Activated CD4-positive, alpha-beta memory T cell treated with anti-CD3 and anti-CD28 coated beads, Interleukin-2, amount 10 ng/mL, durations not matched to agents 7 days and 5 days (primary cell): ENCODE measurements at regions of chr12 and their contacts with region 1.

Region 1: GRCh38 chr12:12376646-12377448 is 20.0 kb downstream of the BORCS5 start:
- DNase-seq: no peak
- H3K4me3 Mint-ChIP-seq: no peak overlapping the region
- H3K27ac Mint-ChIP-seq: peak overlapping the region; percentile 65
- H3K4me1 Mint-ChIP-seq: peaks cover 60% of the 10 kb centered on the region
- H3K27me3 Mint-ChIP-seq: no peaks in the 10 kb centered on the region

Region 2: GRCh38 chr12:12334367-12335040 is 42.3 kb before region 1 on chr12:
- CTCF ChIA-PET with region 1: no interaction called
- POLR2A ChIA-PET with region 1: no interaction called
- DNase-seq: peak; percentile 65
- H3K4me3 Mint-ChIP-seq: no peak overlapping the region
- H3K27ac Mint-ChIP-seq: no peak overlapping the region
- H3K4me1 Mint-ChIP-seq: peaks cover 23% of the 10 kb centered on the region
- H3K27me3 Mint-ChIP-seq: peaks cover 13% of the 10 kb centered on the region

Region 3: GRCh38 chr12:12456637-12457036 is 79.8 kb after region 1 on chr12:
- CTCF ChIA-PET with region 1: interaction called, 8 read pairs
- POLR2A ChIA-PET with region 1: interaction called, 22 read pairs
- DNase-seq: no peak
- H3K4me3 Mint-ChIP-seq: peak overlapping the region; percentile 46
- H3K27ac Mint-ChIP-seq: peak overlapping the region; percentile 84
- H3K4me1 Mint-ChIP-seq: peaks cover 61% of the 10 kb centered on the region
- H3K27me3 Mint-ChIP-seq: no peaks in the 10 kb centered on the region

Region 4: DNA sequence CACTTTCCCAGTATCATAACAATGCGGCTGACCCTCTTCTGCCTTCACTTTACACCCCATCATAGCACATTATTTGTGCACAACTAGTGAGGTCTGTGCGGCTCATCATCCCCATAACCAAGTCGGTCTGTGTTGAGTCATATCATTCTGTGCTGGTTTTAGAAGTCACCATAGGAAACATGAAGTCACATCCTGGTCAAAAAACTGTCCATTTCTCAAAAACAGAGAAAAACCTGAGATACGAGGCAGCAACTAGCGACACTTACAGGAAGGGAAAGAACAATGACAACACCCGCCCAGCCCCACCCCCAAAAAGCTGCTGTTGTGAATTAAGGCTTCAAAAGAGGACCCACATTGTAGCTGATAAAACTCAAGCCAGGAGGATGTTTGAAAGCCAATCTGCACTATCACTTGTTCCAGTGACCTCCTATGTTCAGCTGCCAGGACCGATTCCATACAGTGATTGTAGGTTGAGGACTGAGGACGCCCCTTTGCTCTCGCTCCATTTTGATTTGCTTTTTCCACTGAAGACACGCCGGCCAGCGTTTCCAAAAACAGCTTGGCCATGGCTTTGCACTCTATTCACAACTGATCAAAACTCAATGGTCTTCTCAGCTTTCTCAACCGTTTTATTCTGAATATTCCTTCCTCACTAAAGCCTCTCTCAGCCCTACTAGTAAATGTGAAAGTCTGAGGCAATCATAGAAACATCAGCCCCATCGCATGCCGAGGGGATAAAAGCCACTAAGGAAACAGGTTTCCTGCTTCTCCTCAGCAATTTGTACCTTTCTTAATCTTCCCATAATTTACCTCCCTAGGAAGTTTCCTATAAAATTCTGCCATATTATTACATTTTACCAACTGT is 98.3 kb after region 1 on chr12:
- CTCF ChIA-PET with region 1: interaction called, 42 read pairs
- POLR2A ChIA-PET with region 1: interaction called, 238 read pairs
- DNase-seq: peak; percentile 74
- H3K4me3 Mint-ChIP-seq: peak overlapping the region; percentile 67
- H3K27ac Mint-ChIP-seq: peak overlapping the region; percentile 100
- H3K4me1 Mint-ChIP-seq: peaks cover 86% of the 10 kb centered on the region
- H3K27me3 Mint-ChIP-seq: no peaks in the 10 kb centered on the region

Region 5: GRCh38 chr12:12505544-12506495 is 129.0 kb after region 1 on chr12:
- CTCF ChIA-PET with region 1: interaction called, 30 read pairs
- POLR2A ChIA-PET with region 1: interaction called, 64 read pairs
- DNase-seq: no peak
- H3K4me3 Mint-ChIP-seq: peak overlapping the region; percentile 65
- H3K27ac Mint-ChIP-seq: peak overlapping the region; percentile 81
- H3K4me1 Mint-ChIP-seq: peaks cover 76% of the 10 kb centered on the region
- H3K27me3 Mint-ChIP-seq: no peaks in the 10 kb centered on the region

Region 6: DNA sequence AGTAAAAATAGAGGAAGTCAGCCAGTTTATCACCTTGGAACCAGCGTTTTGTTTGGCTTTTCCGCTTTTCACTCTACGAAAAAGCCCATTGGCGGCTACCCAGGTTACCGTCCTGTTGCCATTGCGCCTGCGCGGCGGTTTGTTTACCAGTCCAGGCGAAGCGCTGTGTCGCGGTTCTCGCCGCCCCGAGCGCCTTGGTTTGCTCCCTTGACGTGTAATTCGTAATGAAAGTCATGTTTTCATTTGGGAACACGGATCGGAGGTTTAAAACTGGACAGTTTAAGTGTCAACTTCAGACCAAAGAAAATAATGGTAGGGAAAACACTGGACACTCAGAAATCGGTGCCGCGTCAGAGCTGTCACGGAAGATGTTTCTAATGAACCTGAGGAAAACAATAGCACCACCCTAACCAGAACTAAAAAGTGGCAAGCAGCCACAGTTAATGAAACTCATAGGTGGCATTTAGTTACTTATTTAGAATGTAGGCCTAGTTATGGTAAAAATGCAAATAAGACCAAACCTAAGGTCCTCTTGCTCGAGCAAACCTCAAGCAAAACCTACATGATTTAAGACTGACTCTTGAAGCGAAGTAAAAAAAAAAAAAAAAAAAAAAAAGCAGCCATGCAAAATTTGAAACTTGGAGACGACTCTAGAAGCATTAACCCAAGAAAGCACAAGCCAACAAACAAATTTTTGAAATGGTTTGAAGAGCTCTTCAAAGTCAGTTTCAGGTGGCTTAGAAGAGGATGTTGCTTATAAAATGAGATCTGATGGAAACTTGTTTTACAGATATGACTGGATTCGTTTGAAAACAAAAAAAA is 319.9 kb after region 1 on chr12:
- CTCF ChIA-PET with region 1: interaction called, 10 read pairs
- POLR2A ChIA-PET with region 1: interaction called, 15 read pairs
- DNase-seq: peak; percentile 93
- H3K4me3 Mint-ChIP-seq: peak overlapping the region; percentile 83
- H3K27ac Mint-ChIP-seq: peak overlapping the region; percentile 100
- H3K4me1 Mint-ChIP-seq: peaks cover 63% of the 10 kb centered on the region
- H3K27me3 Mint-ChIP-seq: no peaks in the 10 kb centered on the region